ENCODE measurements at regions of chr15 and their contacts with region 1.

Region 1: DNA sequence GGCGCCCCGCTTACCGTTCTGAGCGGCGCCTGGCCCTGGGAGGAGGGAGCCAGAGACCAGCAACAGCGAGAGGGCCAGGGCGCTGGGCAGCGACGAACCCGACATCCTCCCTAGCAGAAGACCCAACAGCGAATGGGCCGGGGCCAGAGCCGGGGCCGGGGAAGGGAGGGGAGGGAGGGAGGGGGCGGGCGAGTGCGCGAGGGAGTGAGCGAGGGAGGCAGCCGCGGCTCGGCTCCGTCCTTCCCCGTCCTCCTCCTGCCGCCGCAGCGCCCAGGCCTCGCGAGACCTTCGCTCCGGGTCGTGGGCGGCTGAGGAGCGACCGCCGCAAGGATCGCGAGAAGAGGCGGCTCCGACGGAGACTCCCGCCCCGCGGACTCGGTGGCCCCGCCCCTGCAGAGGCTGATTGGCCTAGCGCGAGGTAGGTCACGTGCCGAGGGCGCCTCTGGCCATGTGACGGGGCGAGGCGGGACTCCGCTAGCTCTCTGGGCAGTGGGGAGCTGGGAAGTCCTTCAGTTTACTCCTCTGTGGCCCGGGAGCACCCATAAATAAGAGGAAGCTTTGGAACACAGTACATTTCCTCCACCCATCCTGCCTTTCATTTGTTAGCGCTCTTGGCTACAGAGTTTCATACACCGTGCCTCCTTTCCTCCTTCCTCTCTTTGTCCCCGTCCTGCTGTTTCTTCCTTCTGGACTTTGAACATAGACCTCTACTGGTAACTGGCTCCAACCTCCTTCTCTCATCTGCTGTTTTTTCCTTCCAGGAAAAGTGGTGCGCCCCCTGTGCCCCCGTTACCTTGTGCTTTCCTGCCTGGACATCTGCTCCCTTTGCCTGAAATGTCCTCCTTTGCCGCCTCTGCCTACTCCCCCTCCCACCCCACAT is at the start of gene NPTN:
- DNase-seq: peak; percentile 98
- ATAC-seq: peak; percentile 98
- H3K4me3 Mint-ChIP-seq: peak within 1 kb of the TSS; percentile 80
- H3K27ac Mint-ChIP-seq: peak within 1 kb of the TSS; percentile 69
- H3K4me1 Mint-ChIP-seq: peaks cover 40% of the 10 kb centered on the region
- H3K27me3 Mint-ChIP-seq: peaks cover 14% of the 10 kb centered on the region
- total RNA-seq, gene NPTN: 31.4 to 33.0 TPM

Region 2: GRCh38 chr15:73265536-73266153 is 367.7 kb before region 1 on chr15:
- CTCF ChIA-PET with region 1: interaction called, 14 read pairs
- POLR2A ChIA-PET with region 1: no interaction called
- DNase-seq: peak; percentile 68
- ATAC-seq: peak; percentile 85
- H3K4me3 Mint-ChIP-seq: no peak overlapping the region
- H3K27ac Mint-ChIP-seq: no peak overlapping the region
- H3K4me1 Mint-ChIP-seq: no peaks in the 10 kb centered on the region
- H3K27me3 Mint-ChIP-seq: peaks cover 2% of the 10 kb centered on the region

Region 3: DNA sequence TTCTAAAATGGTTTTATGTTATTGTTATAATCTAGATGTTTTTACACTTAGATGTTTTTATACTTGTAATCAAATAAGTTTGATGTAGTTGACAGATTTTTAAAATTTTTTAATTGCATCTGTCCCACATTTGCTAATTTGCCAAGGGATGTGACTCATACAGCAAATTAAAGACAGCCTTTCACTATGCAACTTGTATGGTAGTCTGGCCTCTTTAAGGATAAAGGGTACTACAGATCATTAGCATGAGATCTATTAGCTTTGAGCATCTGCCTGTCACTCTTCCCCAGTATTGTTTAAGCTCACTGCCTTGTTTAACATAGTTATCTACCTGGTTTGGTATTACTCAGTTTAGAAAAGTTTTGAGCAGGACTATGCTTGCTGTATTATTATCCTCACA is 83.2 kb before region 1 on chr15:
- CTCF ChIA-PET with region 1: interaction called, 10 read pairs
- POLR2A ChIA-PET with region 1: no interaction called
- DNase-seq: no peak
- ATAC-seq: no peak
- H3K4me3 Mint-ChIP-seq: no peak overlapping the region
- H3K27ac Mint-ChIP-seq: no peak overlapping the region
- H3K4me1 Mint-ChIP-seq: peaks cover under 1% of the 10 kb centered on the region
- H3K27me3 Mint-ChIP-seq: peaks cover 2% of the 10 kb centered on the region

Region 4: DNA sequence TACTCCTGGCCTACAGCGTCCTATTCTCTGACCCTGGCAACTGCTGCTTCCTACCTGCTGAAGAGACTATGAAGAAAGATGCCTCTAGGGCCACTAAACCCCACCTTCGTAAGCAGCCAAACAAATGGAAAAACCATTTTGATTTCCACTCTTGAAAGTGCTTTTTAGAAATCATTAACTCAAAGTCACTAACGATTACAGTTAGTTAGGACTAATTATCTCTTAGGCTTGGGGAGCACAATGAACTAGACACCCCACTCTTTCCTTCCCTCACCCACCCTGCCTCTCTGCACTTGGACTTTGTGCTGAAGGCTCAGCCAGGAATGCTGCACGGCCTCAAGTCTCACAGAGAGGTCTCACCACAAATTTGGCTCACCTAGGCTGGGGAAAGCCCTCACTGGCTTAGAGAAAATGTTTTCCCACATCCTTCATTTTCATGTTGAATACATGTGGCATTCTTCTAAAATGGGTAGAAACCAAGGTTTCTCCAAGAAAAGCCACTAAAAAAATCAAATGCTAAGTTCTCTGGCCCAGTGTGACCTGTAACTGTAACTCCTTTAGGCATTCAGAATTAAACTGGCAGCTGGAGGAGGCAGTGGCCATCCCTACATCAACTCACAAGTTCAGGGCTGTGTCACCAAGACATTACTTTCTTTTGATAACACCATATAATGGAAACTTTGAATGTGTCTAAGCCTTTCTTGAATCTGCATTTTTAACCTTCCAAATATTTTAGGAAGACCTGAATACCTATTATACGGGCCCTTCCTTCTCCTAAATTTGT is 47.3 kb before region 1 on chr15:
- CTCF ChIA-PET with region 1: interaction called, 23 read pairs
- POLR2A ChIA-PET with region 1: interaction called, 3 read pairs
- DNase-seq: no peak
- ATAC-seq: no peak
- H3K4me3 Mint-ChIP-seq: no peak overlapping the region
- H3K27ac Mint-ChIP-seq: no peak overlapping the region
- H3K4me1 Mint-ChIP-seq: peaks cover 46% of the 10 kb centered on the region
- H3K27me3 Mint-ChIP-seq: no peaks in the 10 kb centered on the region

Region 5: GRCh38 chr15:73650416-73651126 is 17.2 kb after region 1 on chr15:
- CTCF ChIA-PET with region 1: interaction called, 18 read pairs
- POLR2A ChIA-PET with region 1: no interaction called
- DNase-seq: no peak
- ATAC-seq: no peak
- H3K4me3 Mint-ChIP-seq: no peak overlapping the region
- H3K27ac Mint-ChIP-seq: no peak overlapping the region
- H3K4me1 Mint-ChIP-seq: peaks cover 6% of the 10 kb centered on the region
- H3K27me3 Mint-ChIP-seq: peaks cover 18% of the 10 kb centered on the region

Region 6: GRCh38 chr15:73691396-73691795 is 58.0 kb after region 1 on chr15:
- CTCF ChIA-PET with region 1: interaction called, 228 read pairs
- POLR2A ChIA-PET with region 1: no interaction called
- DNase-seq: no peak
- ATAC-seq: no peak
- H3K4me3 Mint-ChIP-seq: no peak overlapping the region
- H3K27ac Mint-ChIP-seq: no peak overlapping the region
- H3K4me1 Mint-ChIP-seq: peaks cover 13% of the 10 kb centered on the region
- H3K27me3 Mint-ChIP-seq: peaks cover 49% of the 10 kb centered on the region